H1 (cell line): ENCODE measurements at regions of chr10 and their contacts with region 1.

Region 1: DNA sequence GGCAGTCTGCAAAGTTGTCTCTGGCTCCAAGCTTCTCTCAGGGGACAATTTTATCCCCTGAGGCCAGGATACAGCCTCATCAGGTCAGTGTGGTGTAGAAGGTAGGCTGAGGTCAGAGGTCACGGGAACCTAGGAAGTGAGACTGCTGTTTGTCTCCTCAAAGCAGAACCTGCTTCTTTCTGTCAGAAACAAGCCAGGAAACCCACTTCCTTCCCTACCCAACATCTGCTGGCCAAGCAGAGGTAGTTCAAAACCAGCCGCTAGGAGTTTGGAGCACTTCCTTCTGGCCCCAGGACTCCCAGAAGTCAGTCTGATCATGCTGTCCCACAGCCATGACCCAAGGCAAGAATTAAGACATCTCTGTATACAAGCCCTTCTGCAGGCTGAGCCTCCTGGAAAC is 12.2 kb downstream of the CLRN3 start:
- DNase-seq: peak in 1 of 2 experiments; percentile 30
- H3K4me3 ChIP-seq: no peak overlapping the region
- H3K27ac ChIP-seq: no peak overlapping the region
- H3K4me1 ChIP-seq: no peaks in the 10 kb centered on the region; a peak in 2 of 7 replicates
- H3K27me3 ChIP-seq: no peaks in the 10 kb centered on the region
- CTCF ChIP-seq: no peak
- EP300 ChIP-seq: no peak
- POLR2A ChIP-seq: no peak
- RAD21 ChIP-seq: no peak

Region 2: DNA sequence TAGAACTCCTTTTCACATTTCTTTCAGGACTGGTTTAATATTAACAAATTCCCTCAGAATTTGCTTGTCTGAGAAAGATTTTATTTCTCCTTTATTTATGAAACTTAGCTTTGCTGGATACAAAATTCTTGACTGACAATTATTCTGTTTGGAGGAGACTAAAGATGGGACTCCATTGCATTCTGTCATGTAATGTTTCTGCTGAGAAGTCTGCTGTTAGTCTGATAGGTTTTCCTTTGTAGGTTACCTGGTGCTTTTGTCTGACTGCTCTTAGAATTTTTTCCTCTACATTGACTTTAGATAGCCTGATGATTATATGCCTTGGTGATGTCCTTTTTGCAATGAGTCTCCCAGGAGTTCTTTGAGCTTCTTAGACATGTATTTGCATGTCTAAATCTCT is 11.2 kb before region 1 on chr10:
- CTCF ChIA-PET with region 1: interaction called, 11 read pairs
- POLR2A ChIA-PET with region 1: no interaction called
- DNase-seq: no peak
- H3K4me3 ChIP-seq: no peak overlapping the region
- H3K27ac ChIP-seq: no peak overlapping the region
- H3K4me1 ChIP-seq: no peaks in the 10 kb centered on the region
- H3K27me3 ChIP-seq: no peaks in the 10 kb centered on the region; a peak in 1 of 7 replicates
- CTCF ChIP-seq: no peak
- EP300 ChIP-seq: no peak
- POLR2A ChIP-seq: no peak
- RAD21 ChIP-seq: no peak